ENCODE measurements at regions of chr1 and their contacts with region 1.

Region 1: DNA sequence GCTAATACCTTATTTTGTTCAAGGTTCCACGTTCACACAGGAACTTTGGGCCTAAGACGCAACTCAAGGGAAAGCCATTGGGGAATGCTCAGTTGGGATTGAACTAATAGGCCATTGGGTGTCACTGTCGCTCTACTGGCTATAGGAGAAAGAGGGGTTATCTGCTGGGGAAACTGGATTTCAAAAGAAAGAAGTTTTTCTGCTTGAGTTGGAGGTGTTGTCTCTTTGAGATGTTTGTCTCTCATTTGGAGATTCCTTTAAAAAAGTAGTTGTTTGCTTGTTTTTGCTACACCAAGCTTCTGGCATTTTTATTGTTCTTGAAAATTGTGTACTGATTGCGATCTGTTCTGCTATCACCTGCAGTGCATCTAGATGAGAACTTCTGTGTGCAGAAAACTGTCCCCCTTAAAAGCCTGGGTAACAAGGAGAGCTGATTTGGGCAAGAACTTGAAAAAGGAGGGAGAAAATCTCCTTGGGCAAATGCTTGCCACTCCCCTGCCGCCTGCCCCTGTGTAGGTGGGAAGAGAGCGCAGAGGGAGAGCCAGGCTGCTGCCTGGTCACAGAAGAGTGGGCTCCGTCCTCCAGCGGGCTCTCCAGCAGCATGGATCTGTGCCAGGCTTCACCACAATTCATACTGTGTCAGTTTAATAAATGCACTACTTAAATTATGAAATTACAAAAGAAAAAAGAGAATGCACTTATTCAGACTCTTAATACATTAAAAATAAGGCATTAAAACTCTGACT is 39.9 kb downstream of the PEX14 start:
- DNase-seq: no peak
- H3K4me3 Mint-ChIP-seq: no peak overlapping the region
- H3K27ac Mint-ChIP-seq: peak overlapping the region; percentile 55
- H3K4me1 Mint-ChIP-seq: peaks cover 37% of the 10 kb centered on the region
- H3K27me3 Mint-ChIP-seq: no peaks in the 10 kb centered on the region
- CTCF ChIP-seq: peak; percentile 45

Region 2: GRCh38 chr1:10539411-10540043 is 24.9 kb after region 1 on chr1:
- CTCF ChIA-PET with region 1: no interaction called
- POLR2A ChIA-PET with region 1: no interaction called
- intact Hi-C with region 1: no loop called
- DNase-seq: no peak
- H3K4me3 Mint-ChIP-seq: no peak overlapping the region
- H3K27ac Mint-ChIP-seq: no peak overlapping the region
- H3K4me1 Mint-ChIP-seq: peaks cover 1% of the 10 kb centered on the region
- H3K27me3 Mint-ChIP-seq: no peaks in the 10 kb centered on the region
- CTCF ChIP-seq: no peak

Region 3: GRCh38 chr1:10941891-10942541 is 427.4 kb after region 1 on chr1:
- CTCF ChIA-PET with region 1: no interaction called
- POLR2A ChIA-PET with region 1: no interaction called
- intact Hi-C with region 1: loop called (anchors 1 kb)
- DNase-seq: peak; percentile 56
- H3K4me3 Mint-ChIP-seq: no peak overlapping the region
- H3K27ac Mint-ChIP-seq: no peak overlapping the region
- H3K4me1 Mint-ChIP-seq: peaks cover 15% of the 10 kb centered on the region
- H3K27me3 Mint-ChIP-seq: peaks cover 11% of the 10 kb centered on the region
- CTCF ChIP-seq: peak; percentile 98

Measured in MCF 10A (cell line).